ENCODE measurements at regions of chr2 and their contacts with region 1.

Region 1: DNA sequence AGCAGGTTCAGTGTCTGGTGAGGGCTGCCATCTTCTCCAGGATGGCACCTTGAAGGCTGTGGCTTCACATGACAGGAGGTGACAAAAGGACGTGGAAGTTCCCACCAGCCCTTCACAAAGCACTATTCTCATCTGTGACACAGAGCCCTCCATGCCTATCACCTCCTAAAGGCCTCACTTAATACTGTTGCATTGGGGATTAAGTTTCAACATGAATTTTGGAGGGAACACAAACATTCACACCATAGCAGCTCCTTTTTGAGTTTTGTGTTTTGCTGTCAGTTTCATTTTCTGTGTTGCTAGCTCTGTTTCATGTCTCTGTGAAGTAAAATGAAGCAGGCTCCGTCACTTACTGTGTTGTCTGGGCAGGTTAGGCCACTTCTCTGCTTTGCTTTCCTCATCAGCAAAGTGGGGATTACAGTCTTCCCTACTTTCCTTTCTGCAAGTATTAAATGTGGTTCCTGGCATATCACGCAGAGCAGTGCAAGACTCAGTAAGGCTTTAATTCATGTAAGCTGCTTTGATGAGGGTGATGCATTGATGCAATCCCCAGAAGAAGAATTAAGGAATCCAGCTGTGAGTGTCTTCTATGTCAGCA is 31.6 kb downstream of the LIMS1 start:
- DNase-seq: no peak
- ATAC-seq: peak; percentile 91
- H3K4me3 ChIP-seq: peak overlapping the region; percentile 53; the same call in 1 of the 2 replicates
- H3K27ac ChIP-seq: peak overlapping the region; percentile 75
- H3K4me1 ChIP-seq: peaks cover 9% of the 10 kb centered on the region
- H3K27me3 ChIP-seq: no peaks in the 10 kb centered on the region
- CTCF ChIP-seq: no peak
- EP300 ChIP-seq: no peak
- POLR2A ChIP-seq: no peak
- RAD21 ChIP-seq: no peak

Region 2: DNA sequence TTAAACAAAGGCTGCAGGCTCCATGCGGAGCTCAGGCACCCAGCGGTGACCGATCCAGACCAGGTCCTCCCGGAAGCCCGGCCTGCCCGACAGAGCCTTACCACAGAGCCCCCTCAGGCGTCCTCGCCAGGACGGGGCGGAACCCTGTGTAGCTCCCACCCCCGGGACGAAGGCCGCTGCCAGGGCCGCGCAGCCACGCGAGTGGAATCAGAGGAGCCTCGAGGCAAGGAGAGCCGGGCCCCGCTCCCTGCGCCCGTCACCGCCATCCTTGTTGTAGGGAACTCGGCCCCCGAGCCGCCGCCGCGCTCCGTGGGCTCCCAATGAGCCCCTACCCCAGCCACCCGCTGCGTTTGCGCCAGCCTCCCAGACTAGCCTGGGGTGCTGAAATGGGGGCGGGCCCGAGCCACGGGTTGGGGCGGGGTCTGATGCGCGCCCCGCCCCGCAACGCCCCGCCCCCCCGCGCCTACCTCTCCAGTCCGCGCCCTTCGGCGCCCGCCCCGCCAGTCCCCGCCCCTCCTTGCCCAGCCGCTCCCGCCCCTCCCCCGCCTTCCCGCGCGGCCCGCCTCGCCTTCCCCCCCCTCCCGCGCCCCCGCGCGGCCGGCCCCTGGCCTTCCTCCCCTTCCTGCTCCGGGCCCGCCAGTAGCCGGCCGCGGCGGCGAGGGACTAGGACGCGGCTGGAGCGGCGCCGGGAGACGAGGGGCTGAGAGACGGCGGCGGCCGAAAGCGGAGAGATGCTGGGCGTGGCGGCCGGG is 31.9 kb before region 1 on chr2 and contains the start of gene LIMS1:
- CTCF ChIA-PET with region 1: interaction called, 6 read pairs
- POLR2A ChIA-PET with region 1: interaction called, 18 read pairs
- RAD21 ChIA-PET with region 1: interaction called, 129 read pairs
- SMC1A ChIA-PET with region 1: interaction called, 214 read pairs
- in situ Hi-C with region 1: no loop called
- intact Hi-C with region 1: no loop called
- DNase-seq: peak; percentile 50
- ATAC-seq: peak; percentile 94
- H3K4me3 ChIP-seq: peak within 1 kb of the TSS; percentile 85
- H3K27ac ChIP-seq: peak within 1 kb of the TSS; percentile 66
- H3K4me1 ChIP-seq: no peaks in the 10 kb centered on the region; the same call in 1 of the 2 replicates
- H3K27me3 ChIP-seq: no peaks in the 10 kb centered on the region
- CTCF ChIP-seq: 0 out of 6 replicates have a peak, but pooled peaks of 1 of the 3 experiments have one; percentile 7
- EP300 ChIP-seq: no peak
- POLR2A ChIP-seq: peak; percentile 93
- RAD21 ChIP-seq: 0 out of 2 replicates have a peak, but pooled peaks have one; percentile 9
- polyA plus RNA-seq, gene LIMS1: 15.7 to 17.6 TPM

Region 3: DNA sequence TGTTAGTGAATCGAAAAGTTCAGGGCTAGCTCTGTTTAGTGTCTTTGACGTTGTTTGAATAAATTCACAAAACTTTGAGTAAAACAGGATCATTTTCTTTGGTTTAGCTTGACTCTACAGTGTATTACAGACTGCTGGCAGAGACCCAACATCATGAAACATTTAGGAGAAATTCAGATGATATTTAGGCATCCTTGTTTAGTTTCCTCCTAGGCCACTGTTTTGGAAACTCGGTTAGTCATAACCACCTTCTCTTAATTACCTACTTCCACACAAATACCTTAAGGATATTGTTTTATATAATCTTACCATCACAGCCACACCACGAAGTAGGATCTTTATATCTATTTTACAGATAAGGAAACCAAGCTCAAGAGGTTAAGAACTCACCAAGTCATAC is 23.8 kb before region 1 on chr2:
- CTCF ChIA-PET with region 1: interaction called, 4 read pairs
- POLR2A ChIA-PET with region 1: interaction called, 3 read pairs
- RAD21 ChIA-PET with region 1: interaction called, 129 read pairs
- SMC1A ChIA-PET with region 1: interaction called, 214 read pairs
- in situ Hi-C with region 1: no loop called
- intact Hi-C with region 1: no loop called
- DNase-seq: no peak
- ATAC-seq: no peak
- H3K4me3 ChIP-seq: no peak overlapping the region
- H3K27ac ChIP-seq: no peak overlapping the region
- H3K4me1 ChIP-seq: no peaks in the 10 kb centered on the region; the same call in 1 of the 2 replicates
- H3K27me3 ChIP-seq: no peaks in the 10 kb centered on the region
- CTCF ChIP-seq: no peak
- EP300 ChIP-seq: no peak
- POLR2A ChIP-seq: no peak
- RAD21 ChIP-seq: no peak

Measured in GM12878 (cell line).